ENCODE measurements at regions of chr20 and their contacts with region 1.

Region 1: DNA sequence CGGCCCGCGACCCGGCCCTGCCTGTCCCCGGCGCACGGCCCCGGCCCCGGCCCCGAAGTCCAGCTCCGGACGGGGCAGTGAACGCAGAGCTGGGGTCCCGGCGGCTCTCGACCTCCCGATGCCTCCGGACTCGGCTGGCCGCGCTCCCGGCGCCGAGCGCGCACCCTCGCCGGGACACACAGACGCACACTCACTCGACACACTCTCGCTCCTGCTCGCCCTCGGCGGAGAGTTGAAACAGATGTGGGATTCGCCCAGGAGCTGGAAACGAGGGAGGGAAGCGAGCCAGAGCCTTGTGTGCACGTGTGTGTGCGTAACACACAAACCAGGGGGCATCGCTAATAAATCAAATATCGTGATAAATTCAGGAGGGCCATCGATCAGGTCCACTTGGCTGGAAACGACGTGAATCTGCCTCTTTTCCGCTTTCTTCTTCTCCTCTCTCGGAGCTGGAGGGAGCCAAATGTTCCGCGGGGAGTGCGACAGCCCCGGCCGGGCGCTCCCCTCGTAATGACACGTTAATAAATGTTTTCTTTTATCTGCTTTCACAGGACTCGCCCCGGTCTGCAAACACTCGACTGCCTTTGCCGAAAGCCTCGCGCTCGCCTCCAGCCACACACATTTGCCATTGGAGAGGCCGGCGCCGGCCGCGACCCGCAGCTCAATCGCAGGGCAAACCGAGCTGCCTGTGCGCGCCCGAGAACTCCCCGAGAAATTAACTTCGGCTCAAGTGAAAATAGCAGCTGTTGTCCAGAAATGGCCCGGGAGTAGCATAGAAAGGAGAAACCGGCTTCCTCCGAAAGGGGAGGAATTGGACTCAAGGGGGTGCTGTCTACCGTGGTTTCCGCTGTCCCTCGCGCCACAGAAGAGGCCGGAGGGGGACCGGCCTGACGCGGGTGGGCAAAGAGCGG is 828 bp upstream of the SULF2 start:
- DNase-seq: peak; percentile 79
- H3K4me3 ChIP-seq: peak overlapping the region; percentile 56 to 62 (median 56)
- H3K27ac ChIP-seq: peak overlapping the region; percentile 57
- H3K4me1 ChIP-seq: peaks cover 44% of the 10 kb centered on the region
- H3K27me3 ChIP-seq: no peaks in the 10 kb centered on the region
- CTCF ChIP-seq: peak; percentile 56 to 80

Region 2: GRCh38 chr20:47677635-47678453 is 108.3 kb before region 1 on chr20:
- CTCF ChIA-PET with region 1: no interaction called
- dilution Hi-C with region 1: loop called (anchors 10 kb)
- in situ Hi-C with region 1: no loop called
- intact Hi-C with region 1: loop called (anchors 5 kb)
- DNase-seq: peak; percentile 55
- H3K4me3 ChIP-seq: no peak overlapping the region
- H3K27ac ChIP-seq: no peak overlapping the region
- H3K4me1 ChIP-seq: no peaks in the 10 kb centered on the region
- H3K27me3 ChIP-seq: no peaks in the 10 kb centered on the region
- CTCF ChIP-seq: peak; percentile 68 to 79

Region 3: GRCh38 chr20:47809111-47809912 is 23.2 kb after region 1 on chr20:
- CTCF ChIA-PET with region 1: no interaction called
- dilution Hi-C with region 1: no loop called
- in situ Hi-C with region 1: no loop called
- intact Hi-C with region 1: no loop called
- DNase-seq: peak; percentile 95
- H3K4me3 ChIP-seq: no peak overlapping the region
- H3K27ac ChIP-seq: peak overlapping the region; percentile 68
- H3K4me1 ChIP-seq: peaks cover 28% of the 10 kb centered on the region
- H3K27me3 ChIP-seq: no peaks in the 10 kb centered on the region
- CTCF ChIP-seq: no peak

Region 4: GRCh38 chr20:47854163-47854562 is 68.1 kb after region 1 on chr20:
- CTCF ChIA-PET with region 1: no interaction called
- dilution Hi-C with region 1: no loop called
- in situ Hi-C with region 1: no loop called
- intact Hi-C with region 1: loop called (anchors 2 kb)
- DNase-seq: no peak
- H3K4me3 ChIP-seq: no peak overlapping the region
- H3K27ac ChIP-seq: no peak overlapping the region
- H3K4me1 ChIP-seq: no peaks in the 10 kb centered on the region
- H3K27me3 ChIP-seq: no peaks in the 10 kb centered on the region
- CTCF ChIP-seq: no peak

Region 5: DNA sequence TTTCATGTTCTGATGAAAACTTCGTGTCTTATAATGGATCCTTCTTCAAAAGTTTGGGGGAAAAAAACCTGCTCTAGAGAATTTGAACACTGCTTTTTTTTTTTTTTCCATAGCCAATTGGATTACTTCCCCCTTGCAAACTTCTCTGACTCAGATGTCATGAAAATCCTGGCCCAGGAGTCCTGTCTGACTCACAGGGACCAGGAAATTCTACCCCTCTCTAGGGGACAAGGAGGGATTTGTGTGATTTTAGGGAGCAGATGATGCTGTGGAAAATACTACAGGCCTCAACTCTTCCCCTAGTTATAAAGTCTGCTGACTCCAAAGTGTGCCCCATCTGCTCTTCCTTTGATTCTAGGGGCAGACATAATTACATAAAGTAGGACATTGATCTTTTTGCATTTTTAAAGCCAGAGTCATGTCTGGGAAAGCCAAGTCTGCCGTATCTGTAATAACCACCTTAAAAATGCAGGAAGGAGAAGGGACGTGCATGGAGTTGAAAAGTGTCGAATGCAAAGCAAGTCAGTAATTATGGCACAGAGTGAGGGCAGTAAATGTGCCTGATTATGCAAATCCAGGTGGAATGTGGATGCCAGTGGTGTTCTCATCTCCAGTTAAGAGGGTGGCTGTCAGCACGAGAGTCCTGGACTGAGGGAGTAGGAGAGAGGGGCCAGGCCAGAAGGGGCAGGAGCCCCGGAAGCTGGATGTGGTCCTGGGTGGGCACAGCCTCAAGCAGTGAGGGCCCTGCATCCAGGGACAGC is 143.4 kb after region 1 on chr20:
- CTCF ChIA-PET with region 1: interaction called, 4 read pairs
- dilution Hi-C with region 1: no loop called
- in situ Hi-C with region 1: loop called in 1 of 2 experiments (anchors 5 kb)
- intact Hi-C with region 1: loop called (anchors 2 kb)
- DNase-seq: peak; percentile 90
- H3K4me3 ChIP-seq: no peak overlapping the region
- H3K27ac ChIP-seq: peak overlapping the region; percentile 99
- H3K4me1 ChIP-seq: peaks cover 46% of the 10 kb centered on the region
- H3K27me3 ChIP-seq: no peaks in the 10 kb centered on the region
- CTCF ChIP-seq: no peak

Region 6: GRCh38 chr20:48188657-48189551 is 402.8 kb after region 1 on chr20:
- CTCF ChIA-PET with region 1: interaction called, 3 read pairs
- dilution Hi-C with region 1: no loop called
- in situ Hi-C with region 1: loop called in 1 of 2 experiments (anchors 10 kb)
- intact Hi-C with region 1: loop called (anchors 1 kb)
- DNase-seq: peak; percentile 83
- H3K4me3 ChIP-seq: no peak overlapping the region
- H3K27ac ChIP-seq: no peak overlapping the region
- H3K4me1 ChIP-seq: peaks cover 31% of the 10 kb centered on the region
- H3K27me3 ChIP-seq: no peaks in the 10 kb centered on the region
- CTCF ChIP-seq: peak; percentile 57 to 81

Region 7: GRCh38 chr20:48295445-48295963 is 509.4 kb after region 1 on chr20:
- CTCF ChIA-PET with region 1: interaction called, 4 read pairs
- dilution Hi-C with region 1: loop called (anchors 5 kb)
- in situ Hi-C with region 1: loop called (anchors 5 to 10 kb)
- intact Hi-C with region 1: loop called (anchors 1 kb)
- DNase-seq: peak; percentile 88
- H3K4me3 ChIP-seq: no peak overlapping the region
- H3K27ac ChIP-seq: no peak overlapping the region
- H3K4me1 ChIP-seq: peaks cover 31% of the 10 kb centered on the region
- H3K27me3 ChIP-seq: no peaks in the 10 kb centered on the region
- CTCF ChIP-seq: peak; percentile 64 to 66

Measured in mammary epithelial cell (primary cell).